ENCODE measurements at regions of chr3 and their contacts with region 1.

Region 1: GRCh38 chr3:120567370-120568201 is 28.6 kb upstream of the NDUFB4 start:
- DNase-seq: no peak
- ATAC-seq: peak; percentile 53 to 87 (median 82)
- H3K4me3 ChIP-seq: peak overlapping the region in 7 of 10 donors; percentile 10 to 39 (median 25)
- H3K27ac ChIP-seq: peak overlapping the region in 7 of 10 donors; percentile 12 to 61 (median 52)
- H3K4me1 ChIP-seq: peaks cover 0 to 23% (median 0%) of the 10 kb centered on the region in 9 donors
- H3K27me3 ChIP-seq: no peaks in the 10 kb centered on the region
- CTCF ChIP-seq: peak in 7 of 9 donors; percentile 10 to 61 (median 46)

Region 2: GRCh38 chr3:120596116-120596852 is 28.7 kb after region 1 on chr3 and contains the start of gene NDUFB4:
- intact Hi-C with region 1: loop called in 1 of 10 experiments (anchors 2 kb)
- DNase-seq: peak; percentile 97 to 99
- ATAC-seq: peak; percentile 99 to 100 (median 100)
- H3K4me3 ChIP-seq: peak within 1 kb of the TSS; percentile 55 to 99 (median 91)
- H3K27ac ChIP-seq: peak within 1 kb of the TSS; percentile 82 to 99 (median 95)
- H3K4me1 ChIP-seq: peaks cover 9 to 50% (median 39%) of the 10 kb centered on the region in 9 donors
- H3K27me3 ChIP-seq: no peaks in the 10 kb centered on the region
- CTCF ChIP-seq: no peak
- total RNA-seq, gene NDUFB4: 347 to 581 (median 535) TPM

Region 3: GRCh38 chr3:120742198-120742849 is 174.7 kb after region 1 on chr3 and contains the starts of genes GTF2E1 and RABL3:
- intact Hi-C with region 1: loop called in 1 of 10 experiments (anchors 5 kb)
- DNase-seq: peak; percentile 90 to 99
- ATAC-seq: peak; percentile 99 to 100 (median 100)
- H3K4me3 ChIP-seq: peak within 1 kb of the TSS; percentile 64 to 95 (median 84)
- H3K27ac ChIP-seq: peak within 1 kb of the TSS; percentile 73 to 99 (median 94)
- H3K4me1 ChIP-seq: peaks cover 4 to 32% (median 21%) of the 10 kb centered on the region in 9 donors
- H3K27me3 ChIP-seq: no peaks in the 10 kb centered on the region
- CTCF ChIP-seq: no peak
- total RNA-seq, gene GTF2E1: 7.9 to 16.2 (median 11.7) TPM
- total RNA-seq, gene RABL3: 13.8 to 33.9 (median 23.3) TPM

Region 4: DNA sequence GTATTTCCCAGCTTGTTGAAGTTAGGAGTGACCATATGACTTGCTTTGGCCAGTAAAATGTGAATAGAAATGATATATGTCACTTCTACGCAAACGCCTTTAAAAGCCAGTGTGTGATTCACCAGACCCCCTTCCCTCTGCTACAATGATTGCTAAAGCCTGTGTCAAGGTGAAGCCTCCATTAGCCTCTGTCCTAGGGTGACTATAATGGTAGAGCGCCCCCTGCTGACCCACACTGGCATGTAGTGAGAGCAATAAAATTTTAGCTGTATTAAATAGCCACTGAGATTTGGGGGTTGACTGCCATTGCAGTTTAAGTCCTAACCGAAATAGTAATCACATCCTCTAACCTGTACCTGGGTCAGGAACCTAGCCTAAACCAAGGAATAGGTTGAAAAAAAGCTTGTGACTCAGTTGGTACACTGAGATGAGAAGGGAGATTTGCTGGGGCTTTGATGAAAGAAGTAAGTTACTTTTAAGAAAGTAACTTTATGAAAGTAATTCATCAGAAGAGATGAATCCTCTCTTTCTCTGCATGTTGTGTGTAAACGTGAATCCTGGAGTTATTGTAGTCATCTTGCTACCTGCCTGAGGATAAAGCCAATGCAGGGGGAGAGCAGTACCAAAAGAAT is 227.5 kb after region 1 on chr3:
- intact Hi-C with region 1: loop called in 4 of 10 experiments (anchors 2 to 5 kb)
- DNase-seq: peak; percentile 74 to 77
- ATAC-seq: peak; percentile 79 to 94 (median 88)
- H3K4me3 ChIP-seq: no peak overlapping the region
- H3K27ac ChIP-seq: no peak overlapping the region
- H3K4me1 ChIP-seq: no peaks in the 10 kb centered on the region
- H3K27me3 ChIP-seq: no peaks in the 10 kb centered on the region
- CTCF ChIP-seq: peak; percentile 63 to 86 (median 81)

Measured in heart right ventricle (tissue), 16 donors.